ENCODE measurements at regions of chr20 and their contacts with region 1.

Region 1: GRCh38 chr20:10673988-10674711 is at the start of gene JAG1:
- DNase-seq: peak; percentile 94
- H3K4me3 ChIP-seq: peak within 1 kb of the TSS; percentile 91 to 95 (median 94)
- H3K27ac ChIP-seq: peak within 1 kb of the TSS; percentile 92
- H3K4me1 ChIP-seq: peaks cover 31% of the 10 kb centered on the region
- H3K27me3 ChIP-seq: no peaks in the 10 kb centered on the region
- CTCF ChIP-seq: no peak
- POLR2A ChIP-seq: peak; percentile 47
- total RNA-seq, gene JAG1: 31.7 and 37.0 TPM in 2 replicates

Region 2: DNA sequence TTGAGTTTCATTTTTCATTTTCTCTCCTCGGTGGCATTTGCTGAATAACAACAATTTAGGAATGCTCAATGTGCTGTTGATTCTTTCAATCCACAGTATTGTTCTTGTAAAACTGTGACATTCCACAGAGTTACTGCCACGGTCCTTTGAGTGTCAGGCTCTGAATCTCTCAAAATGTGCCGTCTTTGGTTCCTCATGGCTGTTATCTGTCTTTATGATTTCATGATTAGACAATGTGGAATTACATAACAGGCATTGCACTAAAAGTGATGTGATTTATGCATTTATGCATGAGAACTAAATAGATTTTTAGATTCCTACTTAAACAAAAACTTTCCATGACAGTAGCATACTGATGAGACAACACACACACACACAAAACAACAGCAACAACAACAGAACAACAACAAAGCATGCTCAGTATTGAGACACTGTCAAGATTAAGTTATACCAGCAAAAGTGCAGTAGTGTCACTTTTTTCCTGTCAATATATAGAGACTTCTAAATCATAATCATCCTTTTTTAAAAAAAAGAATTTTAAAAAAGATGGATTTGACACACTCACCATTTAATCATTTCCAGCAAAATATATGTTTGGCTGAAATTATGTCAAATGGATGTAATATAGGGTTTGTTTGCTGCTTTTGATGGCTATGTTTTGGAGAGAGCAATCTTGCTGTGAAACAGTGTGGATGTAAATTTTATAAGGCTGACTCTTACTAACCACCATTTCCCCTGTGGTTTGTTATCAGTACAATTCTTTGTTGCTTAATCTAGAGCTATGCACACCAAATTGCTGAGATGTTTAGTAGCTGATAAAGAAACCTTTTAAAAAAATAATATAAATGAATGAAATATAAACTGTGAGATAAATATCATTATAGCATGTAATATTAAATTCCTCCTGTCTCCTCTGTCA is 367.5 kb before region 1 on chr20:
- CTCF ChIA-PET with region 1: no interaction called
- POLR2A ChIA-PET with region 1: no interaction called
- dilution Hi-C with region 1: no loop called
- intact Hi-C with region 1: loop called (anchors 5 kb)
- DNase-seq: peak; percentile 68
- H3K4me3 ChIP-seq: no peak overlapping the region
- H3K27ac ChIP-seq: peak overlapping the region; percentile 87
- H3K4me1 ChIP-seq: peaks cover 38% of the 10 kb centered on the region
- H3K27me3 ChIP-seq: no peaks in the 10 kb centered on the region
- CTCF ChIP-seq: no peak
- POLR2A ChIP-seq: peak; percentile 64

Region 3: DNA sequence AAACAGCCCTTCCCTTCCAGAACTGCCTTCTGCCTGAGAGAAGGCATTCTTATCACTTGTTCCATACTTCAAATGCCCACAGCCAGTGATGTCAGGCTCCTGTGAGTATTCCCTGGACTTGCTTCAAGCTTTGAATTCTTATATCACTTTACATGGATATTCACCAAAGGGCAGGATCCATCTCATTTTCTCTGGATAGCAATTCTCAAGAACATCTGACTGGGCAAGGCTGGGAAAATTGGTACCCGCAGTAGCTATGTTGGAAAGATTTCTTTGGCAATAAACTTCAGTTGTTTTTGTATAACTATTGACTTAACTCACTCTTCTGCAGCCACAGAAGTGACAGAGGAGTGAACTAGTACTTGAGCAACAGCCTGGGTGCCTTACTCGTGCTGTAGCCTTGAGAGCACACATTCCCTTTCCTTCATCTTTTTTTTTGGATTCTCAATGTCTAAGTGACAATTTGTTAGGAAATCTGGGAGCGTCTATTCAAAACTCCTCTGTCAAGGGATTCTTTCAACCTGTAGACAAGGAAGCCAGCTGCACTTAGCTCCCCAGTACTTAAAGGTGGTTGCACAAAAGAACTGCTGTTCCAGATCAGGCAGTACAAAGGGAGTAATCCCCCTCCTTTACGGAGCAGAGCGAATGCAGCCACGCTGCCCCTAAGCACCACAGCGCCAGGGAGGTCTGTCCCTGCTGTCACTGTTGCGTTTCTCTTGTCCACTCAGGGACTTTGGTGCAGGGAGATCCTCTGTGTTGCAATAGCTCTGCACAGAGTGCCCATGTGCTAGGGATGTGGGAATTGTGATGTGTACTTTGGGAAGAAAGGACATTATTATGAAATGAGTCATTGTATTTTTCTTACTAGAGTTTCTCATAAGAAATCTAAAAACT is 69.9 kb before region 1 on chr20:
- CTCF ChIA-PET with region 1: interaction called, 6 read pairs
- POLR2A ChIA-PET with region 1: no interaction called
- dilution Hi-C with region 1: no loop called
- intact Hi-C with region 1: loop called (anchors 2 kb)
- DNase-seq: peak; percentile 89
- H3K4me3 ChIP-seq: no peak overlapping the region
- H3K27ac ChIP-seq: peak overlapping the region; percentile 41
- H3K4me1 ChIP-seq: peaks cover 16% of the 10 kb centered on the region
- H3K27me3 ChIP-seq: no peaks in the 10 kb centered on the region
- CTCF ChIP-seq: no peak
- POLR2A ChIP-seq: no peak

Region 4: GRCh38 chr20:10922941-10923340 is 248.8 kb after region 1 on chr20:
- CTCF ChIA-PET with region 1: no interaction called
- POLR2A ChIA-PET with region 1: no interaction called
- dilution Hi-C with region 1: no loop called
- intact Hi-C with region 1: loop called (anchors 1 kb)
- DNase-seq: no peak
- H3K4me3 ChIP-seq: no peak overlapping the region
- H3K27ac ChIP-seq: no peak overlapping the region
- H3K4me1 ChIP-seq: peaks cover 29% of the 10 kb centered on the region
- H3K27me3 ChIP-seq: no peaks in the 10 kb centered on the region
- CTCF ChIP-seq: no peak
- POLR2A ChIP-seq: no peak

Region 5: GRCh38 chr20:11159728-11160127 is 485.6 kb after region 1 on chr20:
- CTCF ChIA-PET with region 1: interaction called, 3 read pairs
- POLR2A ChIA-PET with region 1: no interaction called
- dilution Hi-C with region 1: no loop called
- intact Hi-C with region 1: loop called (anchors 5 kb)
- DNase-seq: peak; percentile 72
- H3K4me3 ChIP-seq: no peak overlapping the region
- H3K27ac ChIP-seq: no peak overlapping the region
- H3K4me1 ChIP-seq: peaks cover 38% of the 10 kb centered on the region
- H3K27me3 ChIP-seq: no peaks in the 10 kb centered on the region
- CTCF ChIP-seq: no peak
- POLR2A ChIP-seq: no peak

Region 6: DNA sequence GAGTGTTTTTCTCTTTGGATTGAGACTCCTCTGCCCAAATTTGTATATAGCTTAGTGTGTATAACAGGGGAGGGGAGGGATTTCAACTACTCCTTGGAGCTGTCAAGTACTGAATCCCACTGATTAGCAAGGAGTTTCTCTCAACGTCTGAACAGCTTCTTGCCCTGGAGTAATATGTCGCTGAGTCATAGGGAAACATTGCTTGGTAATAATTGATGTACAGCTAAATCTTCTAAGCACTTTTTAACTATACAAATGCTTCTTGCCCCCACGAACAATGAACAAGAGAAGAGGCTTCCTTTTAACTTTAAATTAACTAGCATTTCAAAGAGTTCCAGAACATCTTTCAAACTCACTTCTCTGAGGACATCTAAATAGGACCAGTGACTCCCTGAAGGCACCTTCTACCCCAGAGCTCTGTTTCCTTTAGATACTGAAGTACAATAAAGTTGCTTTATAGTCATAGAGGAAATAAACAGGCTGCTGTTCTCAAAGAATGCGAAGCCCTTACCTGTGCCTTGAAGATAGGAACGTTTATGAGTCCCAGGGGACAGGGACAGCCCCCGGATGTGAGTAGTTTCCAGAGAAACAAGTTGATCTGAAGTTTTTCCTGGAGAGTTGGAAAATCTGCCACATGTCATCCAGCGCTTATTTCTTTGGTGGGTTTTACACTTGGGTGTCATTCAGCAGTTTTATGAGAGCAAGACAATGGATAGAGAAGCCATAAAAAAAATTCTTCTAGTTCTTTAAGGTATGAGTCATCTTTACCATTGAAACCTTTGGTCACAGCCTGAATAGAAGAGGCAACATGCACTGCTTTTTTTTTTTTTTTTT is 781.0 kb after region 1 on chr20:
- CTCF ChIA-PET with region 1: no interaction called
- POLR2A ChIA-PET with region 1: no interaction called
- dilution Hi-C with region 1: no loop called
- intact Hi-C with region 1: loop called (anchors 2 kb)
- DNase-seq: peak; percentile 93
- H3K4me3 ChIP-seq: peak overlapping the region in 1 of 3 experiments; percentile 27
- H3K27ac ChIP-seq: peak overlapping the region; percentile 93
- H3K4me1 ChIP-seq: peaks cover 38% of the 10 kb centered on the region
- H3K27me3 ChIP-seq: no peaks in the 10 kb centered on the region
- CTCF ChIP-seq: no peak
- POLR2A ChIP-seq: peak; percentile 10

Measured in endothelial cell of umbilical vein (primary cell).